ENCODE measurements at regions of chr1 and their contacts with region 1.

Region 1: GRCh38 chr1:117093870-117094621 is 27.5 kb downstream of the TRIM45 start:
- DNase-seq: peak; percentile 78
- H3K4me3 ChIP-seq: peak overlapping the region; percentile 47
- H3K27ac ChIP-seq: peak overlapping the region; percentile 89
- H3K4me1 ChIP-seq: peaks cover 41% of the 10 kb centered on the region
- H3K27me3 ChIP-seq: no peaks in the 10 kb centered on the region

Region 2: DNA sequence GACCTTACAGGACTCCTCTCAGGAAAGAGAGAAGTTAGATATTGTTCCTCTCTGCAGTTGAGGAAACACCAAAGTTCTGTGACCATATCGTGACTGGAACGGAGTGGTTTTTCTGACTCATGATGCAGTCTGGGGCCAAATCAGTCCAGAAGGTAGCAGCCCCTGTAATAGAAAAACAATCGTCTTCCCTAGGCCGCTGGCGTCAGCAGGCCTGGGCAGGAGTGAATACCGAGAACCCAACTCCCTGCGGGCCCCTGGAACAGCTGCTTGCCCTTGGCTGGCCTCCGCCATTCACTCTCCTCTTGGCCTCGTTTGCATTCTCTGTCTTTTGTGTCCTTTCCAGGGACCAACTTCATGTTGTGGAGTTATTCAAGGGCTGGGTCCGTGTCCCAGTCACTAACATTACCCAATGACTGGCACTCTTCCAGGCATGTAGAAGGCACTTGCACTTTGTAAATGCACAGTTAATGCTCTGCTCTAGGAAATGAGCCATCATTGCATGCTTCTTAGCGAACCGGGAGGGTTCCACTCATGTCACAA is 103.4 kb before region 1 on chr1:
- in situ Hi-C with region 1: no loop called
- DNase-seq: peak; percentile 96
- H3K4me3 ChIP-seq: 0 out of 2 replicates have a peak overlapping the region, but pooled peaks have one; percentile 4
- H3K27ac ChIP-seq: peak overlapping the region; percentile 94
- H3K4me1 ChIP-seq: peaks cover 34% of the 10 kb centered on the region
- H3K27me3 ChIP-seq: no peaks in the 10 kb centered on the region

Region 3: DNA sequence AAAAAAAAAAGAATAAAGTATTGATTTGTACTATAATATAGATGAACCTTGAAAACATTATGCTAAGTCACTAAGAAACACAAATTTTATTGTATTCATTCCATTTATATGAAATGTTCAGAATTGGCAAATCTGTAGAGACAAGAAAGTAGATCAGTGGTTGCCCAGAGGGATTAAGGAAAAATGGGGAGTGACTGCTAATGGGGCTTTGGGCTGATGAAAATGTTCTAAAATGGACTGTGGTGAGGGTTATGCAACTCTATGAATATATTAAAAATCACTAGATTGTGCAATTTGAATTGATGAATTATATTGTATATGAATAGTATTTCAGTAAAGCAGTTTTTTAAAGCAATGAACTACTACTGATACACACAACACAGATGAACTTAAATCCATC is 825.3 kb after region 1 on chr1:
- in situ Hi-C with region 1: loop called (anchors 25 kb)
- DNase-seq: no peak
- H3K4me3 ChIP-seq: no peak overlapping the region
- H3K27ac ChIP-seq: no peak overlapping the region
- H3K4me1 ChIP-seq: no peaks in the 10 kb centered on the region
- H3K27me3 ChIP-seq: no peaks in the 10 kb centered on the region